Heart left ventricle (tissue), 16 donors: ENCODE measurements at regions of chr15 and their contacts with region 1.

Region 1: DNA sequence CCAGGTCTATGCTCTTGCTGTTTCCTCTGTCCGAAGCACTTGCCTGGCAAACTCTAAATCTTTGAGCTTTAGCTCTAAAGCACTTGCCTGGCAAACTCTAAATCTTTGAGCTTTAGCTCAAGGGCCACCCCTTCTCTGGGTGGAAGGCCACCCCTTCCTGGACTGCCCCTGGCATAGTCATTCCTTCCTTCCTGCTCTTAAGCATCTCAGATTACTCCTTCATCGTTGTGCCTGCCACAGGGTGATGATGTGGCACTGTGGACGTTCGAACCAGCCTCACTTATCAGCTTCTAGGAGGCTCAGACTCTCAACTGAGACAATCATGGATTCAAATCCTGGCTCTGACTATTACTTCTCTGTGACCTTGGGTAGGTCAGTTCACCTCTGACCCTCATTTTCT is 10.5 kb upstream of the CRABP1 start:
- DNase-seq: no peak
- ATAC-seq: no peak
- H3K4me3 ChIP-seq: no peak overlapping the region
- H3K27ac ChIP-seq: no peak overlapping the region
- H3K4me1 ChIP-seq: peaks cover 0 to 6% (median 0%) of the 10 kb centered on the region in 12 donors
- H3K27me3 ChIP-seq: no peaks in the 10 kb centered on the region
- CTCF ChIP-seq: no peak
- POLR2A ChIP-seq: no peak

Region 2: GRCh38 chr15:78264304-78265136 is 65.1 kb before region 1 on chr15 and contains the start of gene DNAJA4:
- intact Hi-C with region 1: no loop called
- DNase-seq: peak; percentile 64 to 85 (median 82)
- ATAC-seq: peak; percentile 33 to 58 (median 50)
- H3K4me3 ChIP-seq: peak within 1 kb of the TSS; percentile 53 to 91 (median 70)
- H3K27ac ChIP-seq: peak within 1 kb of the TSS; percentile 43 to 96 (median 88)
- H3K4me1 ChIP-seq: peaks cover 0 to 39% (median 17%) of the 10 kb centered on the region in 12 donors
- H3K27me3 ChIP-seq: no peaks in the 10 kb centered on the region
- CTCF ChIP-seq: peak in 6 of 12 donors; percentile 6 to 44 (median 34)
- POLR2A ChIP-seq: no peak
- total RNA-seq, gene DNAJA4: 63.0 to 503 (median 94.6) TPM

Region 3: DNA sequence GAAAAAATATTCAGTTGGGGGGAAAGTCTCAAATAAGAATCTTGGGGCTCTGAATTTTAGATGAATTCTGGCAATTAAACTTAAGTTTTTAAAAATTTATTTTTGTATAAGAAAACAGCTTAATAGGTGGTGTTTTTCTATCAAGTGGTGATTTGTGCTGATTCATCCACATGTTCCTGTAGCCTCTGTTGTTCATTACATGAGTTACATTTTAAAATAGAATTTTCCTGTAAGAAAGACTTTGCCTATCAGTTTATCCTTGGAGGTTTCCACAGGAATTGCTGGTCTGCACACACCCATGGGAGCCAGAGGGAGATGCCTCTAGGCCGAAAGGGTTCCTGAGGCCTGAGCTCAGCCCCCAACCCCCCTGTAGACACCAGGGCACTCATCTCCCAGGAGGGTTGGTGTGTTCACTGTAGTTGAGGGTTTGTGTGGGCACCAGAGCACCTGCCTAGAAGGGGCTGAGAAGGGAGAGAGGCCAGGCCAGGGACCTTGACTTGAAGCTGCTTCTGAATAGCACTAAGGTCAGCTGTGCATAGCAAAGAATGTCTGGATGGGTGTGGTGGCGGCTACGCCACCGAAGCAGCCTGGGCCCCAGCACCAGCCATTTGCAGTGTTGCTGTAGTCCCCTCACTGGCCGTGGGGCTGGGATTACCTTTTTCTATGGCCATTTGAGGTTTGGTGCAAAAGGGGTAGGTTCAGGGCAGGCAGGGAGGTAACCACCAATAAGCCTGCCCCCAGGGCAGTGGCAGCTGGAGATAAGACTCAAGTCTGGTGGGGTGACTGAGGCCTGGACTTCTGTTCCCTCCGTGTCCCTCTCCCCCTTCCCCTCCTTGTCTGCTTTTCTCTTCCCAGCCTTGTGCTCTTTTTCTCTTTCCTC is 53.3 kb before region 1 on chr15:
- intact Hi-C with region 1: loop called in 1 of 10 experiments (anchors 10 kb)
- DNase-seq: no peak
- ATAC-seq: peak in 1 of 4 donors; percentile 23
- H3K4me3 ChIP-seq: no peak overlapping the region
- H3K27ac ChIP-seq: no peak overlapping the region
- H3K4me1 ChIP-seq: peaks cover 0 to 11% (median 0%) of the 10 kb centered on the region in 12 donors
- H3K27me3 ChIP-seq: no peaks in the 10 kb centered on the region
- CTCF ChIP-seq: no peak
- POLR2A ChIP-seq: no peak

Region 4: GRCh38 chr15:78402061-78402610 is 72.5 kb after region 1 on chr15:
- intact Hi-C with region 1: loop called in 1 of 10 experiments (anchors 10 kb)
- DNase-seq: no peak
- ATAC-seq: no peak
- H3K4me3 ChIP-seq: no peak overlapping the region
- H3K27ac ChIP-seq: no peak overlapping the region
- H3K4me1 ChIP-seq: no peaks in the 10 kb centered on the region
- H3K27me3 ChIP-seq: peaks cover 0 to 37% (median 7%) of the 10 kb centered on the region in 9 donors
- CTCF ChIP-seq: no peak
- POLR2A ChIP-seq: no peak